ENCODE measurements at regions of chr16 and their contacts with region 1.

Region 1: DNA sequence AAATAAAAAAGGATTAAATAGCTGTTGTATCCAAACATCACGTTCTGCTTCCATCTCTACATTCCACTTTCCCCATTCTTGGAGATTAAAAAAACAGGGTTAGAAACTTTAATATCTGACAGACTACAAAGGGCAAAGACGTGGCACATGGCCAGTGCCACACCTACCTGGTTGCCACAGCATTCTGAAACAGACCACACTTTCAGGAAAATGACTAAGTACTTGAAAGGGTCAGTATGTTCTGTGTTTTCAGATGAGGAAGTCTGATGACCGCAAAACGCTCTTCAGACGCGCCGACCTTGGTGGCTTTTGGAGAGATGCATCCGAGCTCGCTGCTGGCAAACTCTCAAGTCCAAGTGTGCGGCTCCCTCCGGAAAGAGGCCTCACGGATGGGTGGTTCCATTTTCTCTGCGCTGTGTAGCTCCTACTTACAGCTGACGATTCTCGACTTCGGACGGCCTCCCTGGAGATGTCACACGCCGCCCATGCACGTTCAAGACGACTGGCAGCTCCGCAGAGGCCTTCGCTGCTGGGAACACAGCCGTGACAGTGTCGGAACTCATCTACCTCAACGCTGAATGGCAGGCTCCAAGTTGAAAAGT is 15.5 kb downstream of the MAP1LC3B start:
- DNase-seq: no peak
- ATAC-seq: peak; percentile 43

Region 2: GRCh38 chr16:87560428-87561199 is 153.0 kb after region 1 on chr16:
- intact Hi-C with region 1: loop called in 1 of 2 experiments (anchors 10 kb)
- DNase-seq: peak; percentile 47 to 64
- ATAC-seq: peak; percentile 96